ENCODE measurements at regions of chr2 and their contacts with region 1.

Region 1: DNA sequence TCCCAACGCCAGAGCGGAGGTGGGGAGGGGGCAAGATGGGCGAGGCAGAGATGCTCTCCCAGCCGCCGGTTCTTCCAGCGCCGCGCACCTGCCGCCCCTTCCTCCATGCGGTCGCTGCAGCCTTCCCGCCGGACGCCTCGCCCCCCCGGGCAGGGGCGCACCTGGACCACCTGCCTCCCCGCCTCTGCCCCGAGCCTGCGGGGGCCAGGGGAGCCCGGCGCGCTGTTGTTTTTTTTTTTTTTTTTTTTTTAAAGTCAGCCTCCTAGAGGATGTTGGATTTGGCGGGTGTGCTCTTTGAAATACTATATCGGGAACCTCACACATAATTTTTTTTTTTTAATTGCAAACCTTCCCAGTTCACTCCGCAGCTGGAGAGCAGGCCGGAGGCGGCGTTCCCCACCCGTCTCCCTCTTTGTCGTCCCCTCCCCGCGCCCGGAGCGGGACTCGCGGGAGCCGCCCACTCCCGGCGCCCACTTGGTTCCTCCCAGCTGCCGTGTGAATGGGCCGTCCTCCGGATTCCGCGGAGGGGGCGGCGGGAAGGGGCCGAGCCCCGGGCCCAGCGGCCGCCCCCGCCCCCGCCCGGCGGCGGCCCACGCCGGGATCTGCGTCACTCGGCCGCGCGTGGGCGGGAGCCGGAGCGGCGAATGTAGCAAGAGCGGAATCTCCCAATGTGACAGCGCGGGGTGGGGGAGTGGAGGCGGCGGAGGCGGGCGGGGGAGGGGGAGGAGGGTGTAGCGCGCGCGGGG is 421 bp upstream of the NAB1 start:
- DNase-seq: peak; percentile 83 to 93 (median 89)
- ATAC-seq: peak; percentile 91
- H3K4me3 ChIP-seq: peak overlapping the region; percentile 62
- H3K4me3 Mint-ChIP-seq: peak overlapping the region; percentile 76 to 92 (median 88)
- H3K27ac ChIP-seq: peak overlapping the region; percentile 92
- H3K27ac Mint-ChIP-seq: peak overlapping the region; percentile 15 to 98 (median 90)
- H3K4me1 ChIP-seq: peaks cover 10 to 16% of the 10 kb centered on the region in 2 donors
- H3K4me1 Mint-ChIP-seq: peaks cover 10 to 54% (median 47%) of the 10 kb centered on the region in 7 donors
- H3K27me3 ChIP-seq: no peaks in the 10 kb centered on the region
- H3K27me3 Mint-ChIP-seq: no peaks in the 10 kb centered on the region

Region 2: GRCh38 chr2:189440947-189441708 is 1207.3 kb before region 1 on chr2 and contains the start of gene WDR75:
- CTCF ChIA-PET with region 1: no interaction called
- POLR2A ChIA-PET with region 1: no interaction called
- intact Hi-C with region 1: loop called in 1 of 2 experiments (anchors 2 kb)
- DNase-seq: peak; percentile 73 to 96 (median 94)
- ATAC-seq: peak; percentile 97
- H3K4me3 ChIP-seq: peak within 1 kb of the TSS; percentile 83
- H3K4me3 Mint-ChIP-seq: peak within 1 kb of the TSS in 6 of 10 donors; percentile 99 to 100 (median 100)
- H3K27ac ChIP-seq: peak within 1 kb of the TSS; percentile 92
- H3K27ac Mint-ChIP-seq: peak within 1 kb of the TSS in 8 of 9 donors; percentile 97 to 100 (median 100)
- H3K4me1 ChIP-seq: peaks cover 10 to 14% of the 10 kb centered on the region in 2 donors
- H3K4me1 Mint-ChIP-seq: peaks cover 3 to 13% (median 8%) of the 10 kb centered on the region in 7 donors
- H3K27me3 ChIP-seq: no peaks in the 10 kb centered on the region
- H3K27me3 Mint-ChIP-seq: peaks cover 0 to 10% (median 0%) of the 10 kb centered on the region in 5 donors
- total RNA-seq, gene WDR75: 39.9 to 67.4 (median 60.7) TPM

Region 3: GRCh38 chr2:189762551-189763298 is 885.7 kb before region 1 on chr2 and contains the start of gene OSGEPL1:
- CTCF ChIA-PET with region 1: no interaction called
- POLR2A ChIA-PET with region 1: no interaction called
- intact Hi-C with region 1: loop called in 1 of 2 experiments (anchors 2 kb)
- DNase-seq: peak; percentile 72 to 95 (median 88)
- ATAC-seq: peak; percentile 95
- H3K4me3 ChIP-seq: peak within 1 kb of the TSS; percentile 88
- H3K4me3 Mint-ChIP-seq: peak within 1 kb of the TSS; percentile 88 to 98 (median 94)
- H3K27ac ChIP-seq: peak within 1 kb of the TSS; percentile 89
- H3K27ac Mint-ChIP-seq: peak within 1 kb of the TSS; percentile 94 to 98 (median 96)
- H3K4me1 ChIP-seq: peaks cover 6 to 10% of the 10 kb centered on the region in 2 donors
- H3K4me1 Mint-ChIP-seq: peaks cover 4 to 18% (median 9%) of the 10 kb centered on the region in 7 donors
- H3K27me3 ChIP-seq: no peaks in the 10 kb centered on the region
- H3K27me3 Mint-ChIP-seq: no peaks in the 10 kb centered on the region
- total RNA-seq, gene OSGEPL1: 6.8 to 24.2 (median 7.2) TPM

Region 4: DNA sequence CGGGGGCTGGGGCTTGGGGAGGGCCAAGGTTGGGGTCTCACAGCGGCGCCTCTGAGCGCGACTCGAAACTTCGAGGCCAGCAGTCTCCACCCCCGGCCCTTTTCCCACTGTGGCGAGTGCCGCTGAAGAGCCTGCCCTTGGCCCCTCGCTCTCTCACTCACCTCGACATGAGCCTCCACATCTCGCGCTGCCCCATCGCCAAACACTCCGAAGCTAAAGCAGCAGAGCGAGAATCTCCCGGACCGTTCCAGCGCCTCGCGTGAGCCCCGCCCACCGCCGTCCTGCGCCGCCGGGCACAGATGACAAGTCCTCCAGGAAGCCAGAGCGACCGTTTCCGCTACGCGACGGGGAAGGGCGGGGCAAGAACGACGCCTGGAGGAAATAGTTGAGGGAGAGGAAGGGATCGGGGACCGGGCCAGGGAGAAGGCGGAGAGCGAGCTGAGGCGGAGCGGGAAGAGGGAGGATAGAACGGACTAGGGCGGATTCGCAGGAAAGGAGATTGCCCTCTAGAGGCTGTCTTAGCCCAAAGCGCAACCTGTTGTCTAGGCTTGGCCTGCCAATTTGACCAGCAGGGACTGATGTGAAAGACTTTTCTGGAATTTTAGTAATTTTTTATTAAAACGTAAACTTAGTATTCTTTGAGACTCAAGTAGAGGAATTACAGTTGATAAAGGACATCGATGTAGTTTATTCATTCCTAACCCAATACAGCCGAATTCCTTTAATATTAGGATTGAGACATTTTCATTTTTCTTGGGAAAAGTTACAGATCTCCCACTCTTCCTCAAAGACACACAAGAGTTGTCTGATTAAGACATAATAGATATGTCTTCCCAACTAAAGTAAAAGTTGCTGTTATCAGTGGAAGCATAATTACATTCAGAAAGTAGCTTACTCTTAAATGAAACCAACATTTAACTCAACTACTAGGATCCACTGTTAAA is 328.6 kb before region 1 on chr2 and contains the start of gene HIBCH:
- CTCF ChIA-PET with region 1: interaction called, 3 read pairs
- POLR2A ChIA-PET with region 1: interaction called, 3 read pairs
- intact Hi-C with region 1: loop called in 1 of 2 experiments (anchors 1 kb)
- DNase-seq: peak; percentile 56 to 88 (median 68)
- ATAC-seq: peak; percentile 94
- H3K4me3 ChIP-seq: peak within 1 kb of the TSS; percentile 83
- H3K4me3 Mint-ChIP-seq: peak within 1 kb of the TSS; percentile 85 to 100 (median 97)
- H3K27ac ChIP-seq: peak within 1 kb of the TSS; percentile 82
- H3K27ac Mint-ChIP-seq: peak within 1 kb of the TSS; percentile 91 to 99 (median 95)
- H3K4me1 ChIP-seq: peaks cover 8 to 13% of the 10 kb centered on the region in 2 donors
- H3K4me1 Mint-ChIP-seq: peaks cover 27 to 54% (median 48%) of the 10 kb centered on the region in 7 donors
- H3K27me3 ChIP-seq: no peaks in the 10 kb centered on the region
- H3K27me3 Mint-ChIP-seq: no peaks in the 10 kb centered on the region
- total RNA-seq, gene HIBCH: 11.3 to 25.0 (median 21.6) TPM

Region 5: DNA sequence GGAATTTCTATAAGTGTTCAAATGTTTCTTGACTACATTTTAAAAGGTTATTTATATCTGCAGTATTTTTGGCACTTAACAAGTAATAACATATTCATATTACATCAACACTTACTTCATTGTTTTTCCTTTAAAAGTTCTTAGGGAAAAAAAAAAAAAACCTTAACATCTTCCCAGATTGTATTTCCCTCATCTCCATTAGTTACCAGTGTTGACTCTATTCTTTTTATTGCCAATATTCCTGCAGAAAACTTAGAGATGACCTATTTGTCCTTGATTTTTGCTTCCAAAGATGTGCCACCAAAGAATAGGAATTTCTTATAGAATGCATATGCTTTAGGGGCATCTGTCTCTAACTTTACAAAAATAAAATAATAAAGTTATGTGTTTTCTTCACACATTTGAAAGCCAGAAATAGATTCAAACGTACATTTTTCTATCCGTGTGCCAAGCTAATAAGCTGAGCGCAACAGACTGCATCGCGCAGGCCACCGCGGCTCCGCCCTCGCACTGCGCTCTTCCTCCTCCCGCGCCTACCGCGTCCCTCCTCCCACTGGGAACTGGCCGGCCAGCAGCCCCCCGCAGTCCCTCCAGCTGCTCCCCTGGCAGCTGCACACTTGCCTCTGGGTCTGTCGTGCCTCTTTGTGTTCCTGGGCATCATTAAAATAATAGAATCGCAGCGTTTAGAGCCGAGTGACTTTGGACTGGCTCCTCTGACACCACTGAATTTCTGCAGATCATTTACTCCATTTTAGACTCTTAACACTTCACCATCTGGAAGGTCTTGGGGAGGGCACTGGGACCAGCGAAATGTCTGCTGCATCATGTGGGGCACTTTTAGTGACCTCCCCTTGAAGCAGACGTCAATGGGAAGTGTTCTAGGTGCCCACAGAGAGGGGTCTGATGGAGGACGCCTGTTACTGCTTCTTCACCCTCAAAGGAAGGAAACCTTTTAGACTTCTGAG is 20.7 kb before region 1 on chr2:
- CTCF ChIA-PET with region 1: interaction called, 3 read pairs
- POLR2A ChIA-PET with region 1: interaction called, 6 read pairs
- intact Hi-C with region 1: loop called in 1 of 2 experiments (anchors 1 kb)
- DNase-seq: peak in 6 of 9 donors; percentile 26 to 47 (median 36)
- ATAC-seq: peak; percentile 87
- H3K4me3 ChIP-seq: peak overlapping the region; percentile 64
- H3K4me3 Mint-ChIP-seq: peak overlapping the region; percentile 89 to 98 (median 96)
- H3K27ac ChIP-seq: peak overlapping the region; percentile 63
- H3K27ac Mint-ChIP-seq: peak overlapping the region; percentile 61 to 94 (median 88)
- H3K4me1 ChIP-seq: no peaks in the 10 kb centered on the region
- H3K4me1 Mint-ChIP-seq: peaks cover 9 to 39% (median 33%) of the 10 kb centered on the region in 7 donors
- H3K27me3 ChIP-seq: no peaks in the 10 kb centered on the region
- H3K27me3 Mint-ChIP-seq: peaks cover 0 to 12% (median 0%) of the 10 kb centered on the region in 5 donors

Region 6: GRCh38 chr2:190663348-190663747 is 14.9 kb after region 1 on chr2:
- CTCF ChIA-PET with region 1: no interaction called
- POLR2A ChIA-PET with region 1: interaction called, 6 read pairs
- intact Hi-C with region 1: loop called in 1 of 2 experiments (anchors 1 kb)
- DNase-seq: no peak
- ATAC-seq: no peak
- H3K4me3 ChIP-seq: no peak overlapping the region
- H3K4me3 Mint-ChIP-seq: no peak overlapping the region
- H3K27ac ChIP-seq: no peak overlapping the region
- H3K27ac Mint-ChIP-seq: no peak overlapping the region
- H3K4me1 ChIP-seq: peaks cover 0 to 6% of the 10 kb centered on the region in 2 donors
- H3K4me1 Mint-ChIP-seq: peaks cover 23 to 64% (median 46%) of the 10 kb centered on the region in 7 donors
- H3K27me3 ChIP-seq: no peaks in the 10 kb centered on the region
- H3K27me3 Mint-ChIP-seq: no peaks in the 10 kb centered on the region

Region 7: GRCh38 chr2:191013932-191014652 is 365.6 kb after region 1 on chr2 and contains the start of gene STAT1:
- CTCF ChIA-PET with region 1: no interaction called
- POLR2A ChIA-PET with region 1: no interaction called
- intact Hi-C with region 1: loop called (anchors 2 to 5 kb)
- DNase-seq: peak; percentile 93 to 99 (median 97)
- ATAC-seq: peak; percentile 97
- H3K4me3 ChIP-seq: peak within 1 kb of the TSS; percentile 69
- H3K4me3 Mint-ChIP-seq: no peak within 1 kb of the TSS
- H3K27ac ChIP-seq: peak within 1 kb of the TSS; percentile 87
- H3K27ac Mint-ChIP-seq: no peak within 1 kb of the TSS
- H3K4me1 ChIP-seq: peaks cover 41 to 48% of the 10 kb centered on the region in 2 donors
- H3K4me1 Mint-ChIP-seq: peaks cover 23 to 51% (median 42%) of the 10 kb centered on the region in 7 donors
- H3K27me3 ChIP-seq: no peaks in the 10 kb centered on the region
- H3K27me3 Mint-ChIP-seq: no peaks in the 10 kb centered on the region
- total RNA-seq, gene STAT1: 74.1 to 1,177 (median 89.6) TPM

Measured in naive thymus-derived CD4-positive, alpha-beta T cell (primary cell).